ENCODE measurements at regions of chr3 and their contacts with region 1.

Region 1: GRCh38 chr3:177665122-177665808 is 468.0 kb upstream of the TBL1XR1 start:
- DNase-seq: no peak
- H3K4me3 Mint-ChIP-seq: no peak overlapping the region
- H3K27ac Mint-ChIP-seq: no peak overlapping the region
- H3K4me1 Mint-ChIP-seq: peaks cover 7% of the 10 kb centered on the region
- H3K27me3 Mint-ChIP-seq: no peaks in the 10 kb centered on the region

Region 2: DNA sequence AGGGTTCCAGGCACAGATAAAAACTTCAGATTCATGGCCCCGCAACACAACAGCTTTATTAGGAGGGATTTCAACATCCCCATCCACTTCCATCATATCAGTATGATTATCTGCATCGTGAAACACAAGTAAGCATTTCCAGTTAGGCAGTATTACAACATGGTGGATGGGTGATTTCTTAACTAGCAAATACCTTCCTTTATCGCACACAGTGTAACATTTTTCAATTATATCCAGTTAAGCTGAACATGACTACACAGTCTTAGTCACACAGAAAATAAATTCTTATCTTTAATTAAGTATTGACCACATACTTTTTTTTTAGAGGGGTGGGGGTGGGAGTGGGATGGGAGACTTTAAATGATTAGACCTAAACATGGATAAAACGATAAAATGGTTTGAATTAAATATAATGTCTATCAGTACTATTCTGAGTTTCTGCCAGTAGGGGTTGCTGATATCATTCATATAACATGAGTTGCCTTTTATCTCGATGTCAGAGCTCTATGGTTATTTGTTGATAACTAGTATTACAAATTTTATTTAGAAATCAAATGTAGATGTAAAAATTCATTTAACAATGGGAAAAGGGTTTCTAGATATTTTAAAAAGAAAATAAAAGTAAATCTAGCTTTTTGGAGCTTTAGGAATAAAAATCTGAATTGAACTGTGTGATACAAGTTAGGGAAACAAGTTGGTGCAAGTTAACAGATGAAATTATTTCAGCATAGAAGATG is 614.6 kb before region 1 on chr3:
- CTCF ChIA-PET with region 1: interaction called, 10 read pairs
- POLR2A ChIA-PET with region 1: no interaction called
- intact Hi-C with region 1: loop called (anchors 2 kb)
- DNase-seq: no peak
- H3K4me3 Mint-ChIP-seq: no peak overlapping the region
- H3K27ac Mint-ChIP-seq: no peak overlapping the region
- H3K4me1 Mint-ChIP-seq: peaks cover 12% of the 10 kb centered on the region
- H3K27me3 Mint-ChIP-seq: no peaks in the 10 kb centered on the region

Region 3: GRCh38 chr3:177713928-177714900 is 48.9 kb after region 1 on chr3:
- CTCF ChIA-PET with region 1: no interaction called
- POLR2A ChIA-PET with region 1: no interaction called
- intact Hi-C with region 1: no loop called
- DNase-seq: no peak
- H3K4me3 Mint-ChIP-seq: no peak overlapping the region
- H3K27ac Mint-ChIP-seq: no peak overlapping the region
- H3K4me1 Mint-ChIP-seq: no peaks in the 10 kb centered on the region
- H3K27me3 Mint-ChIP-seq: no peaks in the 10 kb centered on the region